Activated CD4-positive, alpha-beta T cell treated with anti-CD3 and anti-CD28 coated beads for 36 hours (primary cell): ENCODE measurements at regions of chr16 and their contacts with region 1.

Region 1: GRCh38 chr16:3129137-3130131 is 5.4 kb upstream of the ZNF213 start:
- DNase-seq: peak; percentile 85
- ATAC-seq: peak; percentile 78
- H3K4me3 Mint-ChIP-seq: peak overlapping the region; percentile 84
- H3K27ac Mint-ChIP-seq: peak overlapping the region; percentile 90
- H3K4me1 Mint-ChIP-seq: peaks cover 52% of the 10 kb centered on the region
- H3K27me3 Mint-ChIP-seq: no peaks in the 10 kb centered on the region

Region 2: GRCh38 chr16:2897113-2897512 is 232.3 kb before region 1 on chr16:
- CTCF ChIA-PET with region 1: no interaction called
- POLR2A ChIA-PET with region 1: no interaction called
- intact Hi-C with region 1: no loop called
- DNase-seq: no peak
- ATAC-seq: peak; percentile 33
- H3K4me3 Mint-ChIP-seq: no peak overlapping the region
- H3K27ac Mint-ChIP-seq: no peak overlapping the region
- H3K4me1 Mint-ChIP-seq: no peaks in the 10 kb centered on the region
- H3K27me3 Mint-ChIP-seq: no peaks in the 10 kb centered on the region

Region 3: GRCh38 chr16:3045357-3045728 is 84.1 kb before region 1 on chr16:
- CTCF ChIA-PET with region 1: interaction called, 13 read pairs
- POLR2A ChIA-PET with region 1: no interaction called
- intact Hi-C with region 1: no loop called
- DNase-seq: peak; percentile 64
- ATAC-seq: peak; percentile 59
- H3K4me3 Mint-ChIP-seq: peak overlapping the region; percentile 63
- H3K27ac Mint-ChIP-seq: no peak overlapping the region
- H3K4me1 Mint-ChIP-seq: peaks cover 14% of the 10 kb centered on the region
- H3K27me3 Mint-ChIP-seq: peaks cover 43% of the 10 kb centered on the region

Region 4: DNA sequence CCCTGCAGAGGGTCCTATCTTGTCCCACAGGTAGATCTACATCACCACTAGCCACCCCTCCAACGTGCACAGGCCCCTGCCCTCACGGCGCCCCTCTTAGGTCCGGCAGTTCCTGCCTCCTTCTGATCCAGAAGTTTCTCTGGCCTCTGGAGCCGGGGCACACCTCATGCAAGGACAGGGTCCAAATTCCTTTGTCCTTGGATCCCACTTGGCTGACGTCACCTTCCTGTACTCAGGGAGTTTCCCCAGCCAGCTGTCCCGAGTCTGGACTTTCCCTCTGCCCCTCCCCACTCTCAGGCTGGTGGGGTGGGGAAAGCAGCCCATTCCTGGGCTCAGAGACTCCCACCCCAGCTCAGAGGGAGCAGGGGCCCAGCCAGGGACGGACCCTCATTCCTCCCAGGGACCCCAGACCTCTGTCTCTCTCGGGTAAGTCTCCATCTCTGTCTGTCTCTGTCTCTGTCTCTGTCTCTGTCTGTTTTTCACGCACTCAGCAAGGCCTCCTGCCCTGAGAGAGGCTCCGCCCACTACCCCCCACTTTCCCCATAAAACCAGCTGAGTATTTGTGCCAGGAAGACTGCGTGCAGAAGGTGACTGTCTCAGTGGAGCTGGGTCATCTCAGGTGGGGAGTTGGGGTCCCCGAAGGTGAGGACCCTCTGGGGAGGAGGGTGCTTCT is 64.2 kb before region 1 on chr16 and contains the start of gene IL32:
- CTCF ChIA-PET with region 1: interaction called, 83 read pairs
- POLR2A ChIA-PET with region 1: interaction called, 4 read pairs
- intact Hi-C with region 1: loop called in 1 of 2 experiments (anchors 1 kb)
- DNase-seq: peak; percentile 90
- ATAC-seq: peak; percentile 62
- H3K4me3 Mint-ChIP-seq: peak within 1 kb of the TSS; percentile 100
- H3K27ac Mint-ChIP-seq: peak within 1 kb of the TSS; percentile 100
- H3K4me1 Mint-ChIP-seq: peaks cover 64% of the 10 kb centered on the region
- H3K27me3 Mint-ChIP-seq: no peaks in the 10 kb centered on the region
- total RNA-seq, gene IL32: 1,864 to 2,360 TPM

Region 5: GRCh38 chr16:3094289-3095027 is 35.0 kb before region 1 on chr16:
- CTCF ChIA-PET with region 1: interaction called, 125 read pairs
- POLR2A ChIA-PET with region 1: no interaction called
- intact Hi-C with region 1: loop called in 1 of 2 experiments (anchors 1 kb)
- DNase-seq: peak; percentile 77
- ATAC-seq: peak; percentile 53
- H3K4me3 Mint-ChIP-seq: no peak overlapping the region
- H3K27ac Mint-ChIP-seq: peak overlapping the region; percentile 29
- H3K4me1 Mint-ChIP-seq: peaks cover 32% of the 10 kb centered on the region
- H3K27me3 Mint-ChIP-seq: no peaks in the 10 kb centered on the region

Region 6: DNA sequence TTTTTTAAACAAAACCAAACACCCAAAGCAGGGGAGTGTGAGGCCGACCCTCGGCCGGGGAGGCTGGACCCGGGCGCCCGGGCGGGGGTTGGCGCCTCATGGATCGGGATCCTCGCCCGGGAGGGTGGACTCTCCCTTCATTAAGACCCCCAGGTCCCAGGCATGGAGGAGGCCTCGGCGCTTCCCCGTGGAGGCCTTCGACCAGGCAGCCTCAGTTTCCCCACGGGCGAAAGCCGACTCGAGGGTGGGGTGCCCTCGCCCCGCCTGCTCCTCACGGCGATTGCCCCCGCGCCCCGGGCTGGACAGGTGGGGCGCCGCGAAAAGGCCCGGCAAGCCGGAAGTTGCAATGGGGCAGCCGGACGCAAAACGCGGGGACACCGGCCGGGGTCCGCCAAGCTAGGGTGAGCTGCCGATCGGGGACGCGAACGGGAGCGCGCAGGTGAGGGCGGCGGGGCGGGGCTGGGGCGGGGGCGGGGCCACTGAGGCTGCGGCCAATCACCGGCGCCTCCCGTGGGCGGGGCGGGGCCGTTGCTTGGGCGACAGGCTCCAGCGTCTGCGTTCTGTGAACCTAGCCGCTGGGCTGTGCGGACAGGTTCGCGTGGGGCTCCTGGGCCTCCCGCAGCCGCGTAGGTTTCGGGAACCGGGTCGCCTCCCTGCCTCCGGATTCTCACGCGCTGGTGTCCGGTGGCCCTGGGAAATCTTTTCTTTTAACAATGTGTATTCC is 23.1 kb before region 1 on chr16:
- CTCF ChIA-PET with region 1: interaction called, 125 read pairs
- POLR2A ChIA-PET with region 1: interaction called, 8 read pairs
- intact Hi-C with region 1: loop called (anchors 1 kb)
- DNase-seq: peak; percentile 96
- ATAC-seq: peak; percentile 88
- H3K4me3 Mint-ChIP-seq: peak overlapping the region; percentile 76
- H3K27ac Mint-ChIP-seq: peak overlapping the region; percentile 94
- H3K4me1 Mint-ChIP-seq: peaks cover 31% of the 10 kb centered on the region
- H3K27me3 Mint-ChIP-seq: no peaks in the 10 kb centered on the region

Region 7: GRCh38 chr16:3165111-3165822 is 35.8 kb after region 1 on chr16:
- CTCF ChIA-PET with region 1: interaction called, 27 read pairs
- POLR2A ChIA-PET with region 1: no interaction called
- intact Hi-C with region 1: loop called (anchors 1 kb)
- DNase-seq: no peak
- ATAC-seq: no peak
- H3K4me3 Mint-ChIP-seq: peak overlapping the region; percentile 32
- H3K27ac Mint-ChIP-seq: peak overlapping the region; percentile 68
- H3K4me1 Mint-ChIP-seq: peaks cover 10% of the 10 kb centered on the region
- H3K27me3 Mint-ChIP-seq: peaks cover 2% of the 10 kb centered on the region

Region 8: DNA sequence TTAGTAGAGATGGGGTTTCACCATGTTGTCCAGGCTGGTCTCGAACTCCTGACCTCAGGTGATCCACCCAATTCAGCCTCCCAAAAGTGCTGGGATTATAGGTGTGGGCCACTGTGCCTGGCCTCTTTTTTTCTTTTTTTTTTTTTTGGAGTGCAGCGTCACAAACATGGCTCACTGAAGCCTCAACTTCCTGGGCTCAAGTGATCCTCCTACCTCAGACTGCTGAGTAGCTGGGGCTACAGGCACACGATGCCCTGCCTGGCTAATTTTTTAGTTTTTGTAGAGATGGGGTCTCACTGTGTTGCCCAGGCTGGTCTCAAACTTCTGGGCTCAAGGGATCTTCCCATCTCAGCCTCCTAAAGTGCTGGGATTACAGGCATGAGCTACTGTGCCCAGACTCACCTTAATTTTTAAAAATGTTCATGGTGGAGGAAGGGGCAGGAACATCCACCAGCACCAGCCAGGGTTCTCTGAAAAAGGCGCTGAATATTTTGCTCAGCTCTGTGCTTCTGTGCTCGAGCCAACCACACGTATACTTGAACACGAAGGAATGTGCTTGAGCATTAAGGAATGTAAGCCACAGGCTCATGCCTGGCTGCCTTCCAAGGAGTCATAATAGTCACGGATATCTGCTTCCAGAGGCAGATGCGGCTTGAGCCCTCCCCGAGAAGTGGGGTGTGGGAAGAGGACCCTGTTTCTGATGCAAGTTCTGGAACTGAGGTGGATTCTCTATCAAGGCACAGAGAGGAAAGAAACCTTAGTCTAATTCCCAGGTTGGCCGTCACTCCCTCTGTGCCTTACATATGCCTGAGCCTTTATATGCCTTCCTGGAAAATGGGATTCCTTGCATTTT is 816.5 kb after region 1 on chr16:
- CTCF ChIA-PET with region 1: no interaction called
- POLR2A ChIA-PET with region 1: no interaction called
- intact Hi-C with region 1: no loop called
- DNase-seq: no peak
- ATAC-seq: no peak
- H3K4me3 Mint-ChIP-seq: no peak overlapping the region
- H3K27ac Mint-ChIP-seq: no peak overlapping the region
- H3K4me1 Mint-ChIP-seq: no peaks in the 10 kb centered on the region
- H3K27me3 Mint-ChIP-seq: peaks cover 2% of the 10 kb centered on the region